ENCODE measurements at regions of chr3 and their contacts with region 1.

Region 1: DNA sequence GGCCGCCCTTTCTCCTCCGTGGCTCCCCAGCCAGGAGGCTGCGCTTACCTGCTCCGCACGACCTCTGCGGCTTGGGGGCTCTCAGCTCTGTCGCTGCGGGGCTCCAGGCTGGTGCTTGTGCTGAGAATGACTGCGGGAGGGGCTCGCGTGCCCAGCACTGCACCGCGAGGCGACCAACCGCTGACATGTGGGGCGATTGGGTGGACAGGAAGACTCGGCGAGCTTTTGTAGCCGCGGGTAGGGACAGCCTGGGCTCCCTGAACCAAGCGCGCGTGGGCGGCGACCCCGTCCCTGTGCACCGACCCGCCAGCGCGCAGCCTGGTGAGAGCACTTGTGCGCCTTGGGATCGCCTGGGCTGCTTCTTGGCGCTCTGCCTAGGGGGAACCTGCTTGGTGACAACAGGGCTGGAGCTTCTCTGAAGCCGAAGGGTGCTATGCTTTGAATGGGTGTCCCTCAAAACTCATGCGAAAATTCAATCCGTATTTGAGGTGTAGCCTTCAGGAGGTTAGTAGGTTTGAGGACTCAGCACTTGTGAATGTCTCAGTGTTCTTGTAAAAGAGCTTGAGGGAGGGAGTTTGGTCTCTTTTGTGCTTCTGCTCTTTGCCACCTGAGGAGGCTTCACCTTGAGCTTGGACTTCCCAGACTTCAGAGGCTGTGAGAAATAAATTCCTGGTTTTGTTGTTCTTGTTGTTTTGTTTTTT is 50.4 kb downstream of the IL12A start:
- DNase-seq: peak; percentile 74
- H3K4me3 ChIP-seq: peak overlapping the region in 2 of 8 donors; percentile 26 to 45
- H3K27ac ChIP-seq: no peak overlapping the region
- H3K4me1 ChIP-seq: peaks cover 0 to 10% (median 8%) of the 10 kb centered on the region in 6 donors
- H3K27me3 ChIP-seq: peaks cover 0 to 44% (median 20%) of the 10 kb centered on the region in 7 donors
- CTCF ChIP-seq: no peak
- POLR2A ChIP-seq: no peak

Region 2: DNA sequence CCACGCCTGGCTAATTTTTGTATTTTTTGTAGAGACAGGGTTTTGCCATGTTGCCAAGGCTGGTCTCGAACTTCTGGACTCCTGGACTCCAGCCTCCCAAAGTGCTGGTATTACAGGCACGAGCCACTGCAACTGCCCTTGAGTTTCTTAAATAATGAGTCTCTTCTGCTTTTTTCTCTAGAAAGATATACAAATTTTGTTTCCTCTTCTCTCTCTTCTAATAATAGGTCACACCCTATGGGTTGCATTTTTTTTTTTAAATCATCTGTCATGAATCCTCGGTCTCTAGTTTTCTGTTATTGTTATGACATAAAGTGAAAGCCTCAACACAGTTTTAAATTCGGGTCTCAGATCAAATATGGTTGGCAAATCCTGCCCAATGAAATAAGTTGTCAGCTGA is 60.8 kb after region 1 on chr3:
- intact Hi-C with region 1: no loop called
- DNase-seq: no peak
- H3K4me3 ChIP-seq: no peak overlapping the region
- H3K27ac ChIP-seq: no peak overlapping the region
- H3K4me1 ChIP-seq: no peaks in the 10 kb centered on the region
- H3K27me3 ChIP-seq: peaks cover 0 to 4% (median 0%) of the 10 kb centered on the region in 7 donors
- CTCF ChIP-seq: no peak
- POLR2A ChIP-seq: no peak

Region 3: DNA sequence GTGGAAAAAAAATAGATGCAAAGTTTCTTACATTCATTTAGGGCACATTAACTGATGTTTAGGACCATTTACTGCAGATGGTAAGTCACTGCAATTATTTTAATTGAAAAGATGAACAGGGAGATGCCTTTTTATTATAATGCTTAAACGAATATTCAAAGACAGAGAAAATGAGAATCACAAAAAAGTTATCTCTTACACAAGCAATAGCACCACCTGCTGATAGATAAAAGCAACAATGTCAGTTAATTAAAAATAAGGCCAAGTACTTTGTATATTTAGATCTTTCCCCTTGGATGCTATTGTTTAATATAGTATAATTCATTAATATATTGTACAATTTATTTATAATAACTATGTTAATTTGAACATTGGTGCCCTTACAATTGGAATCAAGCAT is 304.1 kb after region 1 on chr3:
- intact Hi-C with region 1: loop called (anchors 10 kb)
- DNase-seq: no peak
- H3K4me3 ChIP-seq: no peak overlapping the region
- H3K27ac ChIP-seq: no peak overlapping the region
- H3K4me1 ChIP-seq: no peaks in the 10 kb centered on the region
- H3K27me3 ChIP-seq: no peaks in the 10 kb centered on the region
- CTCF ChIP-seq: peak in 5 of 11 experiments; percentile 22 to 43 (median 35)
- POLR2A ChIP-seq: no peak

Region 4: DNA sequence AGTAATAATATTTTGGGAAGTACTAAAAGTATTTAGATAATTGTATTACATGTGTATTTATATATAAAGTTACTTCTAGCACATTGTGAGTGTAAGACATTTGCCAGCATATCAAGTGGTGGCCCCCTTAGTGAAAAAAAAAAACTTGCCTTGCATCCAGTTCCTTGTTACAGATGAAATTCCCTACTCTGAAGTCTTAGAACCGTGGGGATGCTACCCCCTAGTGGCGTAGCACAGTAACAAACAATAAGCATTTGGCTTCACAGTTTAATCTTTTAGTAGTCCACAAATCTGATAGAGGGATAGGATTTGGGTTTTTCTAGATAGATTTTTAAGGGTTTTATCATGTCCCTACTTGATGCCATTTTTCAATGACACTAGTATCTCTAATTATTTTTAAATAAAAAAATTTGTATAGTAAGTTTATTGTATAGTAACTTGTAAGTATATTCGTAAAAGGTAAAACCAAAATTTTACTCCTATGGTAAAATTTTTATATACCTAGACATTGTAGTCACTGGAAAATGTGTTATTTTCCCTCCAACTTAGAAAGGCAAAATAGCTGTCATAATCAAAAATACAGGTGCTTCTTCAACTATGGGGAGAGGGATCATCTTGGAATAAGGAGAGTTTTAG is 374.7 kb after region 1 on chr3:
- intact Hi-C with region 1: loop called (anchors 10 kb)
- DNase-seq: peak; percentile 42
- H3K4me3 ChIP-seq: no peak overlapping the region
- H3K27ac ChIP-seq: no peak overlapping the region
- H3K4me1 ChIP-seq: peaks cover 0 to 36% (median 2%) of the 10 kb centered on the region in 6 donors
- H3K27me3 ChIP-seq: no peaks in the 10 kb centered on the region
- CTCF ChIP-seq: peak; percentile 58 to 87 (median 76)
- POLR2A ChIP-seq: no peak

Measured in spleen (tissue), 13 donors.